Pancreas (tissue), 10 donors: ENCODE measurements at regions of chr18 and their contacts with region 1.

Region 1: GRCh38 chr18:34787931-34788532 is 77.9 kb downstream of the DTNA start:
- DNase-seq: peak in 3 of 6 donors; percentile 14 to 39 (median 25)
- ATAC-seq: peak; percentile 66 to 98 (median 92)
- H3K4me3 ChIP-seq: no peak overlapping the region
- H3K27ac ChIP-seq: no peak overlapping the region
- H3K4me1 ChIP-seq: no peaks in the 10 kb centered on the region
- H3K27me3 ChIP-seq: no peaks in the 10 kb centered on the region
- CTCF ChIP-seq: peak; percentile 54 to 68 (median 63)

Region 2: DNA sequence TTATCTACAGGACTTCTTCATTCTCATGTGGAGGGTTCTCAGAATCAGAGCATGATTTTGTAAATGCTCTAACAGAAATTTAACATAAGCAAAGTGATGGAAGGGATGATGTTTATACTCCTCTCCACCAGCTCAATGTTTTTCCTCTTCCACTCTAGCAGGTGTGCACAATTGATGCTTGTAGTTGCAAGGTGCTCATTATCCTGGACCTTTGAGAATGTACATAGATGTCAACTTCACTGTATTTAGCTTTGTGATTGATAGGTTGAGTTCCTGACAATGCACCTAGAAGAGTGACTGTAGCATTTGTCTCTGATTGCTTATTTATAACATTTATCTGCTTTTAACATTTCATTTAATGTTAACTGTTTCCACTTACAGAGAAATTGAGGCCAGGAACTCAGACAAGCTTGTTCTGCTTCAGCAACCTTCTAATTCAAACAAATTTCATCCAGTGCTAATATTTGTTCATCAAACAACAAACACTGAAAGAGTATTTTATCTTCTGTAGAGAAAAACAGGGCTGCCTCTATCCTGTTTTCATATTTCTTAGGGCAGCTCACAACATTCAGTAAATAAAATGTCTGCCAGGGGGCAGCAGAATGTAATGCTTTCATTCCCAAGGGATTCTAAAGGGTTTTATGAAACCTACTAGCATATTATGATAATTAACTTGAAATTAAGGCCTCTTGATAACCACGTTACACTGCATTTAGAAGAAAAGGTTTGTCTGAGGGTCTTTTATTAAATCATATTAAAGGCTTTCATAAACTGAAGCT is 435.5 kb before region 1 on chr18:
- intact Hi-C with region 1: loop called in 2 of 3 experiments (anchors 10 kb)
- DNase-seq: peak in 1 of 6 donors; percentile 18
- ATAC-seq: peak; percentile 28 to 85 (median 78)
- H3K4me3 ChIP-seq: no peak overlapping the region
- H3K27ac ChIP-seq: no peak overlapping the region
- H3K4me1 ChIP-seq: peaks cover 0 to 5% (median 0%) of the 10 kb centered on the region in 3 donors
- H3K27me3 ChIP-seq: no peaks in the 10 kb centered on the region
- CTCF ChIP-seq: peak in 3 of 4 donors; percentile 16 to 32 (median 23)